PC-3 (cell line): ENCODE measurements at regions of chr1 and their contacts with region 1.

Region 1: GRCh38 chr1:53592521-53592982 is 133.4 kb downstream of the DMRTB1 start:
- DNase-seq: peak; percentile 76
- ATAC-seq: peak; percentile 97
- H3K4me3 ChIP-seq: no peak overlapping the region
- H3K27ac ChIP-seq: no peak overlapping the region
- H3K4me1 ChIP-seq: peaks cover 4% of the 10 kb centered on the region; the same call in 1 of the 2 replicates
- H3K27me3 ChIP-seq: no peaks in the 10 kb centered on the region
- CTCF ChIP-seq: peak; percentile 56

Region 2: DNA sequence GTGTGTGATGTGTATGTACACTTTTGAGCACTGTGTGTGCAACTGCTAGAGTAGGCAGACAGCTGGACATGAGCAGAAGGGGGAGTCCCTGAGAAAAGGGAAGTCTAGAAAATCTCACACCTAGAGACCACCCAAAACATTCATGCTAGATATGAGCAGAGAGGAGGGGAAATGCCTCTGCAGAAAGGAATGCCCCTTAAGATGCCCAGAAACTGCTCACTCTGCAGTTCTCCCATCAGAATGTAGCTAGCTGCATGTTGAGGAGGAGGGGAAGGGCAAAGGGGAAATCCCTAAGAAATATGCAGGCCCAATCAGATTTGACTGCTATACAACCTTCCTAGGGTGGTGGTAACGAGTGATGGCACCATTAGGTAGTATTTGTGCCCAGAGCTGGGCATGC is 322.4 kb before region 1 on chr1:
- CTCF ChIA-PET with region 1: no interaction called
- POLR2A ChIA-PET with region 1: no interaction called
- intact Hi-C with region 1: no loop called
- DNase-seq: no peak
- ATAC-seq: no peak
- H3K4me3 ChIP-seq: no peak overlapping the region
- H3K27ac ChIP-seq: no peak overlapping the region
- H3K4me1 ChIP-seq: peaks cover 20% of the 10 kb centered on the region
- H3K27me3 ChIP-seq: no peaks in the 10 kb centered on the region
- CTCF ChIP-seq: no peak

Region 3: GRCh38 chr1:53739109-53739681 is 146.6 kb after region 1 on chr1 and contains the start of gene GLIS1:
- CTCF ChIA-PET with region 1: no interaction called
- POLR2A ChIA-PET with region 1: no interaction called
- intact Hi-C with region 1: loop called (anchors 10 kb)
- DNase-seq: peak; percentile 91
- ATAC-seq: peak; percentile 87
- H3K4me3 ChIP-seq: peak within 1 kb of the TSS; percentile 83
- H3K27ac ChIP-seq: peak within 1 kb of the TSS; percentile 83
- H3K4me1 ChIP-seq: peaks cover 48% of the 10 kb centered on the region
- H3K27me3 ChIP-seq: no peaks in the 10 kb centered on the region
- CTCF ChIP-seq: no peak
- total RNA-seq, gene GLIS1: 1.7 and 2.6 TPM in 2 replicates